A549 (cell line): ENCODE measurements at regions of chr14 and their contacts with region 1.

Region 1: GRCh38 chr14:45253068-45253753 is at the start of gene MIS18BP1:
- DNase-seq: peak; percentile 86 to 98
- ATAC-seq: peak; percentile 89 to 95
- H3K4me3 ChIP-seq: peak within 1 kb of the TSS; percentile 72
- H3K27ac ChIP-seq: peak within 1 kb of the TSS; percentile 82 to 92
- H3K4me1 ChIP-seq: peaks cover 22% of the 10 kb centered on the region; the same call in 2 of the 3 replicates
- CTCF ChIP-seq: peak; percentile 66
- EP300 ChIP-seq: 0 out of 5 replicates have a peak, but pooled peaks of 1 of the 2 experiments have one; percentile 14
- POLR2A ChIP-seq: peak; percentile 51
- RAD21 ChIP-seq: no peak; a peak in 1 of 5 replicates
- polyA plus RNA-seq, gene MIS18BP1: 28.0 and 38.0 TPM in 2 replicates

Region 2: GRCh38 chr14:45242706-45243105 is 10.5 kb before region 1 on chr14:
- CTCF ChIA-PET with region 1: interaction called, 10 read pairs
- POLR2A ChIA-PET with region 1: no interaction called
- DNase-seq: no peak
- ATAC-seq: no peak
- H3K4me3 ChIP-seq: no peak overlapping the region
- H3K27ac ChIP-seq: no peak overlapping the region
- H3K4me1 ChIP-seq: peaks cover 13% of the 10 kb centered on the region
- CTCF ChIP-seq: no peak
- EP300 ChIP-seq: no peak
- POLR2A ChIP-seq: no peak
- RAD21 ChIP-seq: no peak

Region 3: DNA sequence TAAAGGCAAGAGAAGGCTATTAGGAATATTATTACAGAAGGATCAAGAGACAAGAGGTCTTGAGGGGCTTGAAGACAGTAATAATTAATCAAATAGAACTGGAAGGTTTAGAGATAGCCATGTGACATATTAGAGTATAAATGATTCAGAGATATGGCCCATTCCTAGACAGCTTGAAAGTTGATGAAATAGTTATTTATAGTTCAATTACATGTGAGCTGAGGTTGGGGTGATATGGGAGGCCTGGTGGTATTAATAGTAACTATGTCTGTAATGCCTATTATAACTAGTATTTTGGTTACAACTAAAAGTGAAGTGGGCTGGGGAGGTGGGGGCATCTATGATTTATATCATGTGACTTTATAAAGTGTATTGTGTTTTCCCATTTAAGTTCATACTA is 13.9 kb after region 1 on chr14:
- CTCF ChIA-PET with region 1: interaction called, 57 read pairs
- POLR2A ChIA-PET with region 1: interaction called, 3 read pairs
- DNase-seq: no peak
- ATAC-seq: no peak
- H3K4me3 ChIP-seq: no peak overlapping the region
- H3K27ac ChIP-seq: no peak overlapping the region
- H3K4me1 ChIP-seq: no peaks in the 10 kb centered on the region
- CTCF ChIP-seq: no peak
- EP300 ChIP-seq: no peak
- POLR2A ChIP-seq: no peak
- RAD21 ChIP-seq: no peak